Activated CD8-positive, alpha-beta memory T cell treated with anti-CD3 and anti-CD28 coated beads, Interleukin-2, amount 10 ng/mL, durations not matched to agents 7 days and 5 days (primary cell): ENCODE measurements at regions of chr11 and their contacts with region 1.

Region 1: GRCh38 chr11:33015621-33016551 is at the start of gene DEPDC7:
- DNase-seq: peak; percentile 79
- ATAC-seq: peak; percentile 86
- H3K4me3 Mint-ChIP-seq: peak within 1 kb of the TSS; percentile 70
- H3K27ac Mint-ChIP-seq: peak within 1 kb of the TSS; percentile 3
- H3K4me1 Mint-ChIP-seq: peaks cover 22% of the 10 kb centered on the region
- H3K27me3 Mint-ChIP-seq: peaks cover 52% of the 10 kb centered on the region
- total RNA-seq, gene DEPDC7: 1.6 to 2.3 TPM

Region 2: DNA sequence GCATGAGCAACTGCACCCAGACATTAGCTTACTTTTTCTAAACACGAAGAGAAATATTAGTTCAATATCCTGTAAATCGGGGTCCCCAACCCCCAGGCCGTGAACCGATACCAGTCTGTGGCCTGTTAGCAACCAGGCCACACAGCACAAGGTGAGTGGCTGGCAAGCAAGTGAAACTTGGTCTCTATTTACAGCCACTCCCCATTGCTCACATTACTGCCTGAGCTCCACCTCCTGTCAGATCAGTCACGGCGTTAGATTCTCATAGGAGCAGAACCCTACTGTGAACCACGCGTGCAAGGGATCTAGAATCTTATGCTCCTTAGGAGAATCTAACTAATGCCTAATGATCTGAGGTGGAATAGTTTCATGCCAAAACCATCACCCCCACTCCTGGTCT is 28.0 kb before region 1 on chr11:
- CTCF ChIA-PET with region 1: no interaction called
- DNase-seq: no peak
- ATAC-seq: no peak
- H3K4me3 Mint-ChIP-seq: no peak overlapping the region
- H3K27ac Mint-ChIP-seq: no peak overlapping the region
- H3K4me1 Mint-ChIP-seq: no peaks in the 10 kb centered on the region
- H3K27me3 Mint-ChIP-seq: peaks cover 3% of the 10 kb centered on the region

Region 3: GRCh38 chr11:33039274-33040032 is 23.6 kb after region 1 on chr11 and contains the start of gene TCP11L1:
- CTCF ChIA-PET with region 1: interaction called, 15 read pairs
- DNase-seq: peak; percentile 88
- ATAC-seq: peak; percentile 85
- H3K4me3 Mint-ChIP-seq: peak within 1 kb of the TSS; percentile 90
- H3K27ac Mint-ChIP-seq: peak within 1 kb of the TSS; percentile 93
- H3K4me1 Mint-ChIP-seq: peaks cover 30% of the 10 kb centered on the region
- H3K27me3 Mint-ChIP-seq: peaks cover 13% of the 10 kb centered on the region
- total RNA-seq, gene TCP11L1: 19.1 to 20.9 TPM

Region 4: DNA sequence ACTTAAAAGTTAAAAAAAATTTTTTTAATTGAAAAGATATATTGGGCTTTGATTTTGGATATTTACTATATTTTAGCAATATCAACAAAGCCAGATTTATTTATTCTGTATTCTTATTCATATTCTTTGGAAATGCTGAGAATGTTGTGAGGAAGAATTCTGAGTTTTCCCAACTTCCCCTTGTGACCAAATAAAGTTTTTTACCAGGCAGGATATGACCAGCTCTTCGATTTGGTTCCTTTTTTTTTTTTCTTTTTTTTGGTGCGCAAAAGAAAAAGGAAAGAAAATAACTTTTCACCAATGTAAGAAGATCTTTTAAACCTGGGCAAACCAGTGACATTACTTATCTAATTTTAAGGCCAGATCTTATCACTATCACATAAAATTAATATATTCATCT is 36.3 kb after region 1 on chr11:
- CTCF ChIA-PET with region 1: no interaction called
- DNase-seq: no peak
- ATAC-seq: no peak
- H3K4me3 Mint-ChIP-seq: no peak overlapping the region
- H3K27ac Mint-ChIP-seq: no peak overlapping the region
- H3K4me1 Mint-ChIP-seq: no peaks in the 10 kb centered on the region
- H3K27me3 Mint-ChIP-seq: no peaks in the 10 kb centered on the region